ENCODE measurements at regions of chr12 and their contacts with region 1.

Region 1: DNA sequence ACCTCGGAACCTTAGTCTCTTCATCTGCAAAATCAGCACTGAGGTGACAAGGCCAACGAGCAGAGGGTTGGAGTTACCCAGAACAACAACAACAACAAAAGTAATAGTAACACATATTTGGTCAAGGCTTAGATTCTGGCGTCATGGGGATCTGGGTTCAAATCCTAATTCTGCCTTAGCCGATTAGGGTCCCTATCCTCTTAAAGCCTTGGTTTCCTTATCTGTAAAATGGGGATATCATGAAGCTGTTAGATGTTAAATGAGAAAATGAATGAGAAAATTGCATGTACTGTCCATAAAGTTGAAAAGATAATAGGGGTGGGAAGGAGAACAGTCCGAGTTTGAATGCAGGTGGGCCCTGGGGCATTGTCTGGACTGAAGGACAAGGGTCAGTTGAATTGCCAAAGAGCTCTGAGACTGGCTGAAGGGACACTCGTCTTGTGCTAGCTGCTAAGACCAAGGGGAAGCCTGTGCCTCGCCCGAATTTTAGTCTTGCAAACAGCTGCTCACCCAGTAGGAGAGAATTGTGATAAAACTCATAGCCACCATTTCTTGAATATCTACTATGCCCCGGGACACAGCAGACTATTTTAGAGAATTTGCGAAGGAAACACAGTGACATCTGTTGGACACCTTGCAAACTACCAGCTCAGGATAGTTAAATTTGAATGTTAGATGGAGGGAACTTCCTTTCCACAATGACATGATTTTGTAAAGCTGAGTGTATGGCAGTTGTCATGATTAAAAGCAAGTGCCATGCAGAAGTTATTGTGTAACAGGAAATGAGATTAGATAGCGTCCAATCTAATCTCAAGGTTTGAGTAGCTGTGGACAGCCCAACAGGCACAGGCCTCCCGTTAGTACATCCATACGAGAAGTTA is 6.8 kb upstream of the HNF1A start:
- DNase-seq: peak; percentile 75 to 78
- ATAC-seq: peak; percentile 90 to 92
- H3K4me3 ChIP-seq: no peak overlapping the region
- H3K27ac ChIP-seq: no peak overlapping the region
- H3K4me1 ChIP-seq: peaks cover 11% of the 10 kb centered on the region
- CTCF ChIP-seq: peak; percentile 85
- EP300 ChIP-seq: no peak
- POLR2A ChIP-seq: no peak
- RAD21 ChIP-seq: peak; percentile 82 to 92

Region 2: DNA sequence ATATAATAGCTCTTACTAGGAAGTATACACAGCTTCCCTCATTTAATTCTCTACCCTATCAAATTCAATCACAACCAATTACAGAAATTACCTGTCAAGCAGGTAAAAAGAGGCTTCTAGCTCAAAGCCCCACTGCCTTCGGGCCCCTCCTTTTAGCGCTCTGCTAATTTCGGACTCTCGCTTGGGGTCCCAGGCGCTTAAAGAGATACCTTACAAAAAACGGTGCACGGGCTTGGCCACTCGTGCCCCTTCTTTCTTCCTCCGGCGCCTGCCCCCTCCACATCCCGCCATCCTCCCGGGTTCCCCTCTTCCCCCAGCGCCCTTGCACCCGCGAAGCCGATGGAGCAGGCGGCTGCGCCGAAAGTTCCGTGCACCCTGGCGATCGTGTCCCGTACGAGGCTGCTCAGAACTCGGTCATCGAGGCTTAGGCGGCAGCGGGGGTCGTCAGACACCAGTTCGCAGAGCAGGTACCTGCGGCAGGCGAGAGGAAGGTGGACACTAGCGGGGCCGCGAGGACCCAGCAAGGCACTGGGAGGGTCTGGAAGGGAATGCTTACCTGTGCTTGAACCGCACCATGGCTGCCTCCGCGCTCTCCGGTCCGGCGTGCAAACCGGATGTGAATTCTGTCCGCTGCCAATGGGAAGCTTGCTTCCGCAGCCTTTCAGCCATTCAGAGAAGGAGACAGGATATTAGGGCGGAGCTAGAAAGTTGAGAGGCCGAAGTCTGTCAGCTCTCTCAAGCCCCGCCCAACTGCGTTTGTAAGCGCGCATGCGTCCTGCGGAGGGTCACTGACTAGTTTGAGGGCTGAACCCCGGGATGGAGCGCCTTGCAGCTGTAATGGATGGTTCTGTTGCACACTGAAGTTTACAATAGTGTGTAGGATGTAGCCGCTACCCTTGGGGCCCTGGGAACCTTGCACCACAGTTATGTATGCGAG is 390.5 kb before region 1 on chr12 and contains the start of gene POP5:
- CTCF ChIA-PET with region 1: interaction called, 64 read pairs
- POLR2A ChIA-PET with region 1: no interaction called
- DNase-seq: peak; percentile 93 to 98
- ATAC-seq: peak; percentile 88 to 95
- H3K4me3 ChIP-seq: peak within 1 kb of the TSS; percentile 82
- H3K27ac ChIP-seq: peak within 1 kb of the TSS; percentile 85 to 86
- H3K4me1 ChIP-seq: peaks cover 7% of the 10 kb centered on the region; the same call in 2 of the 3 replicates
- CTCF ChIP-seq: no peak
- EP300 ChIP-seq: no peak
- POLR2A ChIP-seq: peak; percentile 88
- RAD21 ChIP-seq: no peak; a peak in 1 of 5 replicates
- polyA plus RNA-seq, gene POP5: 111 and 133 TPM in 2 replicates

Region 3: GRCh38 chr12:120588948-120589930 is 382.3 kb before region 1 on chr12:
- CTCF ChIA-PET with region 1: interaction called, 64 read pairs
- POLR2A ChIA-PET with region 1: no interaction called
- DNase-seq: no peak
- ATAC-seq: no peak
- H3K4me3 ChIP-seq: no peak overlapping the region
- H3K27ac ChIP-seq: no peak overlapping the region; a peak in 1 of 6 replicates
- H3K4me1 ChIP-seq: peaks cover under 1% of the 10 kb centered on the region; the same call in 1 of the 3 replicates
- CTCF ChIP-seq: no peak
- EP300 ChIP-seq: no peak
- POLR2A ChIP-seq: no peak
- RAD21 ChIP-seq: no peak

Region 4: GRCh38 chr12:120640840-120641833 is 330.4 kb before region 1 on chr12:
- CTCF ChIA-PET with region 1: interaction called, 76 read pairs
- POLR2A ChIA-PET with region 1: no interaction called
- DNase-seq: peak in 1 of 2 experiments; percentile 56
- ATAC-seq: peak; percentile 82 to 85
- H3K4me3 ChIP-seq: peak overlapping the region; percentile 70
- H3K27ac ChIP-seq: peak overlapping the region in 1 of 2 experiments; percentile 72; a peak in 3 of 6 replicates
- H3K4me1 ChIP-seq: peaks cover 5% of the 10 kb centered on the region; the same call in 2 of the 3 replicates
- CTCF ChIP-seq: no peak
- EP300 ChIP-seq: no peak
- POLR2A ChIP-seq: no peak
- RAD21 ChIP-seq: no peak

Region 5: GRCh38 chr12:120939523-120939922 is 32.0 kb before region 1 on chr12:
- CTCF ChIA-PET with region 1: interaction called, 34 read pairs
- POLR2A ChIA-PET with region 1: no interaction called
- DNase-seq: no peak
- ATAC-seq: no peak
- H3K4me3 ChIP-seq: no peak overlapping the region
- H3K27ac ChIP-seq: no peak overlapping the region
- H3K4me1 ChIP-seq: peaks cover 4% of the 10 kb centered on the region; the same call in 1 of the 3 replicates
- CTCF ChIP-seq: no peak
- EP300 ChIP-seq: no peak
- POLR2A ChIP-seq: no peak
- RAD21 ChIP-seq: no peak

Region 6: DNA sequence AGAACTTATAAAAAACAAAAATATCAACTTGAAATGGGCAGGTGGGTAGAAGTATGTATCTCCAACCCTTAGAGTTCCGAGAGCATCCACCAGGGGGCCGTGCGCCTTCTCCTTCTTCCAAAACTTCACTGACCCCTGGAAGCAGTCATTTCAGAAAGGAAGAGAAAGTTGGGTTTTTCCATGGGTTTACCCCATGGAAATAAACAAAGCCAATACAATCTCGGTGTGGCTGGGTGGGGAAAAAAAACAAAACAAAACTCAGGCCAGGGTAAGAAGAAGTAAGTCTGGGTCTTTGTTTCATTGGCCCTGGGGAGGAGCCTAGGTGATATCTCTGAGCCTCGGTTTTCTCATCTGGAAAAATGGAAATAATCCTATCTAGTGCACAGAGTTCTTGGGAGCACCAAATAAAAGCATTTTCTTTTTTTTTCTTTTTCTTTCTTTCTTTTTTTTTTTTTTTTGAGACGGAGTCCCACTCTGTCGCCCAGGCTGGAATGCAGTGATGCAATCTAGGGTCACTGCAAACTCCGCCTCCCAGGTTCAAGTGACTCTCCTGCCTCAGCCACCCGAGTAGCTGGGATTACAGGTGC is 26.8 kb before region 1 on chr12:
- CTCF ChIA-PET with region 1: interaction called, 34 read pairs
- POLR2A ChIA-PET with region 1: no interaction called
- DNase-seq: peak; percentile 70 to 82
- ATAC-seq: peak; percentile 90 to 92
- H3K4me3 ChIP-seq: no peak overlapping the region
- H3K27ac ChIP-seq: no peak overlapping the region
- H3K4me1 ChIP-seq: peaks cover 4% of the 10 kb centered on the region; the same call in 1 of the 3 replicates
- CTCF ChIP-seq: peak; percentile 74
- EP300 ChIP-seq: no peak
- POLR2A ChIP-seq: no peak
- RAD21 ChIP-seq: peak; percentile 65 to 80

Region 7: DNA sequence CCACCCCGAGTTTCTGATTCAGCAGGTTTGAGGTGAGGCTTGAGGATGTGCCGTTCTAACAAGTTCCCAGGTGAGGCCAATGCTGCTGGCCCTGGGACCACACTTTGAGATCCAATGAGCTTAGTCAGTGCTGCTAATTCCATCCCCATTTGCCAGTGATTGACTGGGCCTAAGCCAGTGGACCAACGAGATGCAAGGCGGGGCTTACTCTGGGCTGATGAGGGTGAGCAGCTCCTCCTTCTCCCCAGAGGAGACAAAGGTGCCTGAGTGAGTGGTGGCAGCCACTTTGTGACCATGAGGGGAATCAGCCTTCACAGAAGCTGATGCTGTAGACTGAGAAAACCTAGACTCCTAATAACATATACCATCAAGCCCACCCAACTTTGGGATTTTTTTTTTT is 16.3 kb before region 1 on chr12:
- CTCF ChIA-PET with region 1: interaction called, 63 read pairs
- POLR2A ChIA-PET with region 1: no interaction called
- DNase-seq: no peak
- ATAC-seq: peak in 1 of 2 experiments; percentile 20; a peak in 3 of 6 replicates
- H3K4me3 ChIP-seq: no peak overlapping the region
- H3K27ac ChIP-seq: no peak overlapping the region
- H3K4me1 ChIP-seq: peaks cover 14% of the 10 kb centered on the region
- CTCF ChIP-seq: no peak
- EP300 ChIP-seq: no peak
- POLR2A ChIP-seq: no peak
- RAD21 ChIP-seq: no peak

Measured in A549 (cell line).